ENCODE measurements at regions of chr1 and their contacts with region 1.

Region 1: DNA sequence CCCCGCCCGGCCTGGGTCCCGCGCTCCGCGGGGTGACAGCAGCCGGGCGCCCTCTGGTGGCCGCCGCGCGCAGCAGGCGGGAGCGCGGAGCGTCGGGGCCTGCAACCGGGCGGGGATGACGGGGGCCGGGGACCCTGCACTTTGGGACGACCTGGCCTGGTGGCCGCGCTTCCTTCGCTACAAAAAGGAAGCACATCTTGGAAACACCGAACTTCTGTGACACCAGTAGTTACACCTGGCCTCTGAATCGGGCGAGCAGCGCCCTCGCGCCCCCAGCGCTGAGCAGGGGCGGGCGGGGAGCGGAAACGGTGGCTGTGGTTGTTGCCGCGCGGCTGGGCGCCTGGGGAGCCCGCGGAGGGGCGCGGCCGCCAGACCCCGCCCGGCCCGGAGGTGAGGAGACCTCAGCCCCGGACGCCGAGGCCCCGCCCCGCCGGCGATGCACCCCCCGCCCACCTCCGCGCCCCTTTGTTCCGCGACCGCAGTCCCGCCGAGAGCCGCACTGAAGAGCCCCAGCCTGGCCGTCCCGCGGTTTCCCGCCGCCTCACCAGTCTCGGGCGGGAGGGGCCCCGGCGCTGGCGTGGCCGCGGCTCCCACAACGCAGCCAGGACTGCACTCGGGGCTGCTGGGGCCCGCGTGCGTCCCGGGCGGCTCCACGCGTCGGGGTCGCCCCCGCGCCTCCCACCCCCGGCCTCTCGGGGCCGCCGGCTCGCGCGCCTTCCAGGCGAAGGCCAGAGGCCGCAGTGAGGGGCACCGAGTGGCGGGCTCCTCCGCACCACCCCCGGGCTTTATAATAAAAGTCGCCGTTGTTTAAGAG is 59.3 kb downstream of the H3-3A start:
- DNase-seq: peak; percentile 78 to 88
- ATAC-seq: peak; percentile 72 to 87 (median 75)
- H3K4me3 ChIP-seq: peak overlapping the region; percentile 41
- H3K4me3 Mint-ChIP-seq: peak overlapping the region; percentile 85
- H3K27ac ChIP-seq: peak overlapping the region; percentile 77
- H3K27ac Mint-ChIP-seq: peak overlapping the region; percentile 81 to 84
- H3K4me1 ChIP-seq: peaks cover 49% of the 10 kb centered on the region
- H3K4me1 Mint-ChIP-seq: peaks cover 18 to 34% of the 10 kb centered on the region in 2 donors
- H3K27me3 ChIP-seq: no peaks in the 10 kb centered on the region
- H3K27me3 Mint-ChIP-seq: peaks cover 0 to 3% of the 10 kb centered on the region in 2 donors
- CTCF ChIP-seq: peak; percentile 86

Region 2: GRCh38 chr1:225474986-225475820 is 646.6 kb before region 1 on chr1:
- intact Hi-C with region 1: loop called (anchors 10 kb)
- DNase-seq: peak; percentile 81 to 85
- ATAC-seq: peak; percentile 92 to 96 (median 93)
- H3K4me3 ChIP-seq: no peak overlapping the region
- H3K4me3 Mint-ChIP-seq: no peak overlapping the region
- H3K27ac ChIP-seq: no peak overlapping the region
- H3K27ac Mint-ChIP-seq: peak overlapping the region; percentile 62 to 77
- H3K4me1 ChIP-seq: peaks cover 56% of the 10 kb centered on the region
- H3K4me1 Mint-ChIP-seq: peaks cover 35 to 48% of the 10 kb centered on the region in 2 donors
- H3K27me3 ChIP-seq: no peaks in the 10 kb centered on the region
- H3K27me3 Mint-ChIP-seq: no peaks in the 10 kb centered on the region
- CTCF ChIP-seq: peak; percentile 100

Region 3: DNA sequence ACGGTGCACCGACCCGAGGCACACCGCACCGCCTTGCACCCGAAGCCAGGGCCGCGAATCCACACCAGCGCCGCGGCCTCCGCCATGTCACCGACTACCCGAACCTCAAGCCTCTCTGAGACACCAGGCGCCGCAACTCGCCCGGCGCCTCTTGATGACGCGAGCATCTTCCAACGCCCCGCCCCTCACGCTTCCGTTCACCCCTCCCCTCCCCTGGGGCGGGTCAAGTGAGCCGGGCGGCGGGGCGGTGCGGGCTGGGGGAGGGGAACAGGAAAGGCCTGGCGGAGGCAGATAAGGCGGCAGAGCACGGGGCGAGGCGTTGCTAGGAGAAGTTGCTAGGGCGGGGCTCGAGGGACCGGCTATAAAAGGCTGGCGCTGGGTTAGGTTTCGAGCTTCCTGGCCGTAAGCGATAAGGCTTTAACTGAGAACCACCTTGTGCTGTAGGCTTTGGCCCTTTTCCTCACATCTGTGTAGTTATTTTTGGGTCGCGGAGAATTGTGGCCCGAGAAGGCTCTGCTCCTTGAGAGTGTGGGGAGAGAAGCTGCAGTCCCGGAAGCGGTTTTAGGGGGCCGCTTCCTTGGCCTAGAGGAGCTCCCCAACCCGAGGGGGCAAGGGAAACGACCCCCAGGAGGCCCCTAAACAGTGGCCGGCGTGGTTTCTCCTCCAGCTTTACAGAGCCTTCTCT is 122.4 kb before region 1 on chr1 and contains the start of gene SDE2:
- intact Hi-C with region 1: loop called (anchors 1 kb)
- DNase-seq: peak; percentile 99
- ATAC-seq: peak; percentile 83 to 97 (median 87)
- H3K4me3 ChIP-seq: peak within 1 kb of the TSS; percentile 81
- H3K4me3 Mint-ChIP-seq: peak within 1 kb of the TSS; percentile 100
- H3K27ac ChIP-seq: peak within 1 kb of the TSS; percentile 99
- H3K27ac Mint-ChIP-seq: peak within 1 kb of the TSS; percentile 96 to 100
- H3K4me1 ChIP-seq: peaks cover 48% of the 10 kb centered on the region
- H3K4me1 Mint-ChIP-seq: peaks cover 63 to 64% of the 10 kb centered on the region in 2 donors
- H3K27me3 ChIP-seq: no peaks in the 10 kb centered on the region
- H3K27me3 Mint-ChIP-seq: no peaks in the 10 kb centered on the region
- CTCF ChIP-seq: no peak
- total RNA-seq, gene SDE2: 52.5 to 62.7 (median 53.6) TPM

Region 4: GRCh38 chr1:226083302-226084101 is 38.3 kb before region 1 on chr1:
- intact Hi-C with region 1: loop called (anchors 5 kb)
- DNase-seq: peak; percentile 94 to 97
- ATAC-seq: peak; percentile 97
- H3K4me3 ChIP-seq: peak overlapping the region; percentile 59
- H3K4me3 Mint-ChIP-seq: peak overlapping the region; percentile 97
- H3K27ac ChIP-seq: no peak overlapping the region
- H3K27ac Mint-ChIP-seq: peak overlapping the region; percentile 58 to 88
- H3K4me1 ChIP-seq: peaks cover 15% of the 10 kb centered on the region
- H3K4me1 Mint-ChIP-seq: peaks cover 11 to 13% of the 10 kb centered on the region in 2 donors
- H3K27me3 ChIP-seq: no peaks in the 10 kb centered on the region
- H3K27me3 Mint-ChIP-seq: no peaks in the 10 kb centered on the region
- CTCF ChIP-seq: no peak

Region 5: GRCh38 chr1:226186124-226187018 is 64.6 kb after region 1 on chr1 and contains the start of gene ACBD3:
- intact Hi-C with region 1: loop called (anchors 2 kb)
- DNase-seq: peak; percentile 80 to 94
- ATAC-seq: peak; percentile 92 to 97 (median 97)
- H3K4me3 ChIP-seq: peak within 1 kb of the TSS; percentile 93
- H3K4me3 Mint-ChIP-seq: peak within 1 kb of the TSS; percentile 98
- H3K27ac ChIP-seq: peak within 1 kb of the TSS; percentile 93
- H3K27ac Mint-ChIP-seq: peak within 1 kb of the TSS; percentile 91 to 92
- H3K4me1 ChIP-seq: peaks cover 31% of the 10 kb centered on the region
- H3K4me1 Mint-ChIP-seq: peaks cover 41% of the 10 kb centered on the region in 2 donors
- H3K27me3 ChIP-seq: no peaks in the 10 kb centered on the region
- H3K27me3 Mint-ChIP-seq: no peaks in the 10 kb centered on the region
- CTCF ChIP-seq: no peak
- total RNA-seq, gene ACBD3: 26.9 to 33.3 (median 28.8) TPM

Region 6: GRCh38 chr1:226407497-226408284 is 285.9 kb after region 1 on chr1 and contains the start of gene PARP1:
- intact Hi-C with region 1: loop called (anchors 10 kb)
- DNase-seq: peak; percentile 88 to 93
- ATAC-seq: peak; percentile 90 to 95 (median 90)
- H3K4me3 ChIP-seq: peak within 1 kb of the TSS; percentile 80
- H3K4me3 Mint-ChIP-seq: peak within 1 kb of the TSS; percentile 97
- H3K27ac ChIP-seq: peak within 1 kb of the TSS; percentile 72
- H3K27ac Mint-ChIP-seq: peak within 1 kb of the TSS; percentile 92 to 95
- H3K4me1 ChIP-seq: peaks cover 48% of the 10 kb centered on the region
- H3K4me1 Mint-ChIP-seq: peaks cover 51 to 54% of the 10 kb centered on the region in 2 donors
- H3K27me3 ChIP-seq: no peaks in the 10 kb centered on the region
- H3K27me3 Mint-ChIP-seq: no peaks in the 10 kb centered on the region
- CTCF ChIP-seq: peak; percentile 79
- total RNA-seq, gene PARP1: 62.0 to 81.5 (median 77.0) TPM

Region 7: GRCh38 chr1:226642876-226643576 is 521.2 kb after region 1 on chr1:
- intact Hi-C with region 1: no loop called
- DNase-seq: peak in 1 of 2 donors; percentile 61
- ATAC-seq: peak; percentile 37 to 81 (median 42)
- H3K4me3 ChIP-seq: no peak overlapping the region
- H3K4me3 Mint-ChIP-seq: peak overlapping the region; percentile 13
- H3K27ac ChIP-seq: peak overlapping the region; percentile 52
- H3K27ac Mint-ChIP-seq: peak overlapping the region; percentile 70 to 85
- H3K4me1 ChIP-seq: peaks cover 43% of the 10 kb centered on the region
- H3K4me1 Mint-ChIP-seq: peaks cover 28 to 29% of the 10 kb centered on the region in 2 donors
- H3K27me3 ChIP-seq: no peaks in the 10 kb centered on the region
- H3K27me3 Mint-ChIP-seq: no peaks in the 10 kb centered on the region
- CTCF ChIP-seq: no peak